IMR-90 (cell line): ENCODE measurements at regions of chr14 and their contacts with region 1.

Region 1: GRCh38 chr14:59438195-59438647 is 27.0 kb downstream of the GPR135 start:
- DNase-seq: peak; percentile 78
- ATAC-seq: peak; percentile 64
- H3K4me3 ChIP-seq: no peak overlapping the region
- H3K27ac ChIP-seq: no peak overlapping the region
- H3K4me1 ChIP-seq: peaks cover 10% of the 10 kb centered on the region
- H3K27me3 ChIP-seq: no peaks in the 10 kb centered on the region
- CTCF ChIP-seq: no peak
- POLR2A ChIP-seq: no peak
- RAD21 ChIP-seq: no peak

Region 2: DNA sequence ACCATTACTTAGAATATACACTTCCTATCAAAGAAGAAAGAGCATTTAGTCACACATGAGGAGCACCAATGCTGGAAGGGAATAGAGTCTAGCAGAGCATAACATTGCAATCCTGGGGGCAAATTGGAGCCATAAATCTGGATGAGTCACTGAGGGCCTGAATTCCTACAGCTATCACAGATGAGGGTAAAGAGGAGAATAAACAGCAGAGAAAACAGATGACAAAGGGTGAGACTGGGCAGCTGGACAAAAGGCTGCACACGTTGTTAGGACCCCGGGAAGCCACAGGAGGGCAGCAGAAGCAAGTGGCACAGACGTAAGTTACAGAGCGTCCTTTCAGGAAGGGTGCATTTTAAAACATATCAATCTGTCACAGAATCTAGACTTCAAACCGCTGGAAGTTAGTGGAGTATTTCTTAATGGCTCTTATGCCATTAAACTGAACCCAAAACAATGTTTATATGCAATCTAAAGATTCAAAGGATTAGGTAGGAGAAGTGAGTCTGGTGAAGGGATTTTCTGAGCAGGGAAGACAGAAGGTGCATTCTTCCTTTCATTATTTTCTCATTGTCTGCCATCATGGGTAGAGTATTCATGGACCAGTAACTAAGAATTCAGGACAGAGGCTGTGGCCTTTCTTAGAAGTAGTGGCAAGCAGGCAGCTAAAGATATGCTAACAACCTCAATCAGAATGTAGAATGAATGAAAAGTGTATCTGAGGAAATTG is 409.6 kb before region 1 on chr14:
- CTCF ChIA-PET with region 1: no interaction called
- POLR2A ChIA-PET with region 1: no interaction called
- dilution Hi-C with region 1: no loop called
- in situ Hi-C with region 1: loop called (anchors 5 kb)
- intact Hi-C with region 1: no loop called
- DNase-seq: peak; percentile 97
- ATAC-seq: peak; percentile 99
- H3K4me3 ChIP-seq: no peak overlapping the region
- H3K27ac ChIP-seq: no peak overlapping the region
- H3K4me1 ChIP-seq: no peaks in the 10 kb centered on the region
- H3K27me3 ChIP-seq: no peaks in the 10 kb centered on the region
- CTCF ChIP-seq: peak; percentile 95
- POLR2A ChIP-seq: no peak
- RAD21 ChIP-seq: peak; percentile 89

Region 3: GRCh38 chr14:59131938-59132795 is 306.1 kb before region 1 on chr14:
- CTCF ChIA-PET with region 1: interaction called, 3 read pairs
- POLR2A ChIA-PET with region 1: no interaction called
- dilution Hi-C with region 1: no loop called
- in situ Hi-C with region 1: loop called (anchors 5 kb)
- intact Hi-C with region 1: loop called (anchors 1 kb)
- DNase-seq: no peak
- ATAC-seq: no peak
- H3K4me3 ChIP-seq: no peak overlapping the region
- H3K27ac ChIP-seq: no peak overlapping the region
- H3K4me1 ChIP-seq: no peaks in the 10 kb centered on the region; the same call in 1 of the 2 replicates
- H3K27me3 ChIP-seq: peaks cover 16% of the 10 kb centered on the region
- CTCF ChIP-seq: no peak
- POLR2A ChIP-seq: no peak
- RAD21 ChIP-seq: no peak

Region 4: GRCh38 chr14:59254146-59254941 is 183.9 kb before region 1 on chr14:
- CTCF ChIA-PET with region 1: no interaction called
- POLR2A ChIA-PET with region 1: no interaction called
- dilution Hi-C with region 1: no loop called
- in situ Hi-C with region 1: no loop called
- intact Hi-C with region 1: loop called (anchors 5 kb)
- DNase-seq: peak; percentile 95
- ATAC-seq: peak; percentile 87
- H3K4me3 ChIP-seq: no peak overlapping the region
- H3K27ac ChIP-seq: peak overlapping the region; percentile 70; the same call in 1 of the 2 replicates
- H3K4me1 ChIP-seq: peaks cover 17% of the 10 kb centered on the region
- H3K27me3 ChIP-seq: no peaks in the 10 kb centered on the region
- CTCF ChIP-seq: no peak
- POLR2A ChIP-seq: no peak
- RAD21 ChIP-seq: no peak

Region 5: DNA sequence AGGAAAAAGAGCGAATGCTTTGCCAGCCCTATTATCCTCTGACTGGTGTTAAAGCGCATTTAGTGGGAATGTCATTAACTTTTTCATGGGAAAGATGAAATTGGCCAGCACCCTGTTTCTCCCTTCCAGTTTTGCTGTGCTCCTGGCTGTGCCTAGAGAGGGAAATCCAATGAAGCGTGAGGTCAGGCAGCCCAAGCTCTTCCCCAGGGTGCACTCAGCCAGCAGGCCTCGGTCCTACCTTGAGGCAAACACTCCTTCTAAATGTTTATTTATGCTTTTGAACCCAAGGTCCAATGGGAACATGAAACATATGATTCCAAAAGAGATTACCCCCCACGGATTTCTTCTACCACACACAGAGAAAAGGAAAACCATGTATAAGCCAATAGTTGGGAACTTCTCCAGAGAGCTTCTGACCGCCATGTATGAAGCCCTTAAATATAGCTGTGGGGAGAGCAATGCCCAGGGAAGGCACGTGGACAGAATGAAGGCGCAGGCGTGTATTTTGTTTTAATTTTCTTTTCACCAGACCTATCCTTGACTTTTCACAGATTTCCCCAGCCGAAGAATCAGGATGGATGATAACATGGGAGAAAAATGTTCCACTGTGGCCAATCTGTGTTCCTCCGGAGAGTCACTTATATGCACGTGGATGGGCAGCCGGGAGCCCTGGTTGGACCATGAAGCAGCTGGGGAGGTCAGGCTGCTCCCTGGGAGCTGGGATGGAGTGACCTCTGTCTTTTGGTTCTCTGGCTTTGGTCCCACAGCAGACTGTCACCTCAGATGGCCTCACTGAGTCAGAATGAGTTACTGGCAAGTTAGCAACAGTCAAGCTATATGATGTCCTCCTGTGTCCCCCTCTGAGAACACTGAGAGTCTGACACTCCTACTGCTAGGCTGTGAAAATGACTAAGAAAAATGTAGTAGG is 10.3 kb before region 1 on chr14:
- CTCF ChIA-PET with region 1: no interaction called
- POLR2A ChIA-PET with region 1: no interaction called
- dilution Hi-C with region 1: no loop called
- in situ Hi-C with region 1: no loop called
- intact Hi-C with region 1: no loop called
- DNase-seq: no peak
- ATAC-seq: peak; percentile 38
- H3K4me3 ChIP-seq: no peak overlapping the region
- H3K27ac ChIP-seq: peak overlapping the region; percentile 42
- H3K4me1 ChIP-seq: peaks cover 3% of the 10 kb centered on the region
- H3K27me3 ChIP-seq: no peaks in the 10 kb centered on the region
- CTCF ChIP-seq: no peak
- POLR2A ChIP-seq: no peak
- RAD21 ChIP-seq: no peak

Region 6: GRCh38 chr14:59454131-59454530 is 15.9 kb after region 1 on chr14:
- CTCF ChIA-PET with region 1: no interaction called
- POLR2A ChIA-PET with region 1: no interaction called
- dilution Hi-C with region 1: no loop called
- in situ Hi-C with region 1: no loop called
- intact Hi-C with region 1: no loop called
- DNase-seq: peak; percentile 98
- ATAC-seq: peak; percentile 92
- H3K4me3 ChIP-seq: no peak overlapping the region
- H3K27ac ChIP-seq: peak overlapping the region; percentile 75
- H3K4me1 ChIP-seq: peaks cover 10% of the 10 kb centered on the region
- H3K27me3 ChIP-seq: no peaks in the 10 kb centered on the region
- CTCF ChIP-seq: no peak
- POLR2A ChIP-seq: peak; percentile 54; the same call in 1 of the 2 replicates
- RAD21 ChIP-seq: peak; percentile 8; the same call in 1 of the 2 replicates

Region 7: DNA sequence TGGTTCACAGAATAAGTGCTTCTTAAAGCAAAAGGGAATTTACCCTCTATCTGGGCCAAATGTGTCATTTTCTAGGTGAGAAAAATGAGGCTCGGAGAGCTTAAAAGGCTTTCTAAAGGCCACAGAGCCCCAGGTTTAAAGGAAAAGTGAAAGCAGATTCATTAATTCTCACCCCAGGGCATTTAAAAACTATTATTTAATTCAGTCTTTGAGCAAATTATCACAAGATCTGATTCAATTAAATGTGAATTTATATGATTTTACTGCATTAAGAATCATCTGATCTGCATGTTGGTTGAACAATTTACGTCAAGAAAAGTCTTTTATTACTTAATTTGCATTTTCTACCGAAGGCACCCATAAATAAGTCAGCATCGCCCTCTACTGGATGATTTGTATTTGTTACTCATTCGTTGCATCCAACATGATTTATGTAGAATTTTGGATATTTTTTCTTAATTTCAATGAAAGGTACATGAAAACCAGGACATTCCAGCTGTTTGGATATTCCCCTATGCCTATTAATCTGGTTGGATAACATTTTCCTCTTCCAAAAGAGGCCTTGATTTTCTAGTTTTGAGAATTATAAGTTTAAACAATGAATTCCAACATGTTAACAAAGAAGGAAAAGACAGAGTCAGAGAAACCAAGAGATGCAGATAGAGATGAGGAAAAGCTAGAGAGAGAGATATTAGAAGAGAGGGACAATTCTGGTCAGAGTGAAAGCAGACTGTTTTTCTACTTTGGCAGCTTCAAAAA is 746.1 kb after region 1 on chr14:
- CTCF ChIA-PET with region 1: no interaction called
- POLR2A ChIA-PET with region 1: no interaction called
- dilution Hi-C with region 1: no loop called
- in situ Hi-C with region 1: no loop called
- intact Hi-C with region 1: no loop called
- DNase-seq: peak; percentile 77
- ATAC-seq: peak; percentile 69
- H3K4me3 ChIP-seq: peak overlapping the region; percentile 38
- H3K27ac ChIP-seq: no peak overlapping the region
- H3K4me1 ChIP-seq: no peaks in the 10 kb centered on the region
- H3K27me3 ChIP-seq: peaks cover 6% of the 10 kb centered on the region
- CTCF ChIP-seq: peak; percentile 94
- POLR2A ChIP-seq: no peak
- RAD21 ChIP-seq: peak; percentile 92